Psoas muscle (tissue), 8 donors: ENCODE measurements at regions of chr16 and their contacts with region 1.

Region 1: DNA sequence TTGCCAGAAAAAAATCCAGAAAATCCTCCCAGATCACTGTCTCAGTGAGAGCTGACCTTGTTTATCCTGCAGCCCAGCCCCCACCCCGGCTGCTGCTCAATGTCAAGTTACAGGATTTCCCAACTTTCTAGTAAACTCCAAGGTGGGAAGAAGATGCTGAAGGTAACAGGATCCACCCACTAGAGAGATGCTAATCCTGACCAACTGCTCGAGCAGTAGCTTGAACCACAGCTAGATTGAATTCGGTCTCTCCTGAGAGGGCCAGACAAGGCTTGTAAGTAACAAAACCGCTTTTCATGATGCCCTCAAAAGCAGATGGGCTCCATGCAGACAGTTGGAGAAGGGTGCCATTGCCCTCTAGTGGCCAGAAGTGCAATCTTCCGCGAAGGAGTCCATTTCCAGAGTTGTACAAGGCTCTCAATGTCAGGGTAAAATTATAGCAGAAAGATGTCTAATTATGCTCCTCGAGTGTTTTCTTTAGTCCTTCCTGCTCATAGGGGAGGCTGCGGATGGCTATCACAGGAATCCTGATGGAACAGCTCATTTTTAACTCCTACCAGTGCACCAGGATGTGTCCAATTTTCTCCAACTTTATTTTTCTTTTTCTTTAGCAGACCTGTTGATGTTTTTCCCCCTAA is 3.9 kb downstream of the CDH11 start:
- DNase-seq: peak; percentile 53 to 68
- ATAC-seq: peak; percentile 79 to 83 (median 80)
- H3K4me3 ChIP-seq: no peak overlapping the region
- H3K27ac ChIP-seq: no peak overlapping the region
- H3K4me1 ChIP-seq: peaks cover 13% of the 10 kb centered on the region
- H3K27me3 ChIP-seq: peaks cover 0 to 26% (median 7%) of the 10 kb centered on the region in 3 donors
- CTCF ChIP-seq: peak; percentile 92

Region 2: DNA sequence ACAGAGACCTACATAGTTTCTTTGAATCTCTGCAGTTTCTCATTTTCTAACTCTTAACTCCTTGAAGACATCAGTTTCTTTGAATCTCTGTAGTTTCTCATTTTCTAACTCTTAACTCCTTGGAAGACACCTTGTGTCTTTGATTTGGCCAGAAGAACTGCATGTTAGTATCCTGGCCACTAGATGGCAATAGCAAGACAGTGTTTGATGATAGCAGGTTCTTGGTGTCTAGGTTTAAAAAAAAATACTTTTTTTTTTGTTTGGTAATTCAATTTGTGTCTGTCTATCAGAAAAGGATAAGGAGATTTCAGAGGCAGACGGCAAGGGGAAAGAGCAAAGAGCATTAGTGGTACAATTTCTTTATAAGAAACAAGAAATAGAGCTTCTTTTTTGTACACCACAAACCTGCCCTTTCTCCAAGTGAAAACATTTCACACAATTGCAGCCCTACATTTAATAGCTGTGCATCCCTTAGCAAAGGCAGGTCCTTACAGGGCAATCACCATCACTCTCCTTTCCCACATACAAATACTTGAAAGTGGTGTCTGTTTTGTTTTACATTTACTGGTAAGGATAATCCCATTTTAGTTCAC is 1756.8 kb before region 1 on chr16:
- intact Hi-C with region 1: loop called in 1 of 2 experiments (anchors 10 kb)
- DNase-seq: no peak
- ATAC-seq: no peak
- H3K4me3 ChIP-seq: no peak overlapping the region
- H3K27ac ChIP-seq: no peak overlapping the region
- H3K4me1 ChIP-seq: no peaks in the 10 kb centered on the region
- H3K27me3 ChIP-seq: no peaks in the 10 kb centered on the region
- CTCF ChIP-seq: peak; percentile 70

Region 3: GRCh38 chr16:64478252-64478906 is 639.6 kb before region 1 on chr16:
- intact Hi-C with region 1: loop called in 1 of 2 experiments (anchors 5 kb)
- DNase-seq: no peak
- ATAC-seq: no peak
- H3K4me3 ChIP-seq: no peak overlapping the region
- H3K27ac ChIP-seq: no peak overlapping the region
- H3K4me1 ChIP-seq: peaks cover 4% of the 10 kb centered on the region
- H3K27me3 ChIP-seq: no peaks in the 10 kb centered on the region
- CTCF ChIP-seq: no peak

Region 4: GRCh38 chr16:64864232-64864809 is 253.6 kb before region 1 on chr16:
- intact Hi-C with region 1: no loop called
- DNase-seq: no peak
- ATAC-seq: peak; percentile 59 to 81 (median 80)
- H3K4me3 ChIP-seq: no peak overlapping the region
- H3K27ac ChIP-seq: peak overlapping the region; percentile 62
- H3K4me1 ChIP-seq: peaks cover 18% of the 10 kb centered on the region
- H3K27me3 ChIP-seq: no peaks in the 10 kb centered on the region
- CTCF ChIP-seq: no peak

Region 5: DNA sequence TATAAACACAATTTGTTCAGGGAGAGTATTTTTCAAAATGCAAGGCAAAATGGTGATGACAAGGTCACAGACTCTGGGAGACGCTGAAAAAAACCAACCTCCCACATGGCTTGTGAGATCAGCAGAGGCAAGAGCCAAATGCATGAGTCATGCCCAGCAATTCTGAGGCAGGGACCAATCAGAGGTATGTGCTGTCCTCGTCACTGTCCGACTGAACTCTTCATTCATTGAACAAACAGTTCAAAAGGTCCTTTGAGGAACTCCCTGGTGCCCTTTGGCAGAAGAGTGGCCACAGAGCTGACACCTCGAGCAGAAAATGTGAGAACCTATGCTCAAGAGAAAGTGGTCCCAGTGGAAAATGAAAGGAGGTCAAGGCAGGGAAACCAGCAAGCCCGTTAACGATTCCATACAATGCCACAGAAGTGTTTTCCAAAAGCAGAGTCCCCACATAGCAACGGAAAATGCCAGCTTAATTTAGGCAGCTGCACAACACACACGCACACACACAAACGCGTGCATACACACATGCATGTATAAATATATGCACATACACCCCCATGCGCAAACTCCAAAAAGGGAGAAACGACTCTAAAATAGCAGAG is 47.0 kb before region 1 on chr16:
- intact Hi-C with region 1: loop called (anchors 5 kb)
- DNase-seq: peak; percentile 69 to 82
- ATAC-seq: peak; percentile 82 to 86 (median 84)
- H3K4me3 ChIP-seq: peak overlapping the region; percentile 55
- H3K27ac ChIP-seq: peak overlapping the region; percentile 93
- H3K4me1 ChIP-seq: peaks cover 32% of the 10 kb centered on the region
- H3K27me3 ChIP-seq: no peaks in the 10 kb centered on the region
- CTCF ChIP-seq: no peak

Region 6: DNA sequence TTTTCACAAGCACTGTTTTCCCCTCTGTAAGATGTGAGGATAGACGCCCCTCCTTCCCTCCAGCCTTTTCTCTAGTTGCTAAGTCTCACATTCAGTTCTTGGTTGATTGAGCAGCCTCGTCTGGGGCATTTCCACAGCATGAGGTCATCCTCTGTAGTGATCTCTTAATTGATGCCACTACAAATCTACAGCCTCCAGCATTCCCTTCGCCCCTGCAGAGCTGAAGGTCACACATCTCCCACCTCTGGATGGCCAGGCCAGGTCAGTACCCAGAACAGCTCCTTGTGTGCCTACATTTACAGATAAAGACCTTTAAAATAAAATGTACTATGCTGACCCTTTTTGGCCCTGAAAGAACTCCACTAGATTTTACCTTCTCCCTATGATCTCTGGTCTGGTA is 36.4 kb after region 1 on chr16:
- intact Hi-C with region 1: no loop called
- DNase-seq: no peak
- ATAC-seq: no peak
- H3K4me3 ChIP-seq: no peak overlapping the region
- H3K27ac ChIP-seq: no peak overlapping the region
- H3K4me1 ChIP-seq: no peaks in the 10 kb centered on the region
- H3K27me3 ChIP-seq: no peaks in the 10 kb centered on the region
- CTCF ChIP-seq: no peak